ENCODE measurements at regions of chr6 and their contacts with region 1.

Region 1: DNA sequence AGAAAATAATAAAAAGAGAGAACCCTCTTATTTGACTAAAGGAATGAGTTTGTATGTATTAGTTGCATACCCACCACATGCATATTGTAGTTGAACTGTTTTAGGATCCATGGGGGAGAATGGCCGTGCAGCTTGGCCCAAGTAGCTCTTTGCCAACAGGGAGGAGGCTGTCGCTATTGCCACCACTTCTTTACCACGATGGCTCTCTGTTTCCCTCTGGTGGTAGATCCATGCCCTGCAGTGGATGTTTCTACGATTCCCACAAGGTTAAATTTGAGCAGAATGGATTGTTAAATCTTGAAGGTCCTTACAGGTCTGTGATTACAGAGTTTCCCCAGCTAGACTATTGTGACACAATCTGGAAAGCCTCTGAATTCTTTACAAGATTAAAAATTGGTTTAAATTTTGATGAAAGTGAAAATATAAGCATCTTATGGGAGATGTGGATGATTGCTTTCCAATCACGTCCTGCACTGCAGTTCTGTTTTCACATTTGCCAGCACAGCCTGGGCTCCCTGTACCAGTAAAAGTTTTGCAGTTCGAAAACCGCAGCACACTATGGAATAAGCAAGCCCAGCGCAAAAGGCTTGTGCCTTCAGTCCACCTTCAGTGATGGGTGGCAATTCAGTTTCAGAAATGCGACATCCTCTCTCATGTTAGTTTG is 34.4 kb upstream of the FNDC1 start:
- DNase-seq: peak; percentile 36
- ATAC-seq: peak; percentile 95
- H3K4me3 ChIP-seq: no peak overlapping the region
- H3K27ac ChIP-seq: no peak overlapping the region
- H3K4me1 ChIP-seq: no peaks in the 10 kb centered on the region
- H3K27me3 ChIP-seq: peaks cover 0 to 2% of the 10 kb centered on the region in 2 experiments; a peak in 1 of 4 replicates
- CTCF ChIP-seq: peak; percentile 89 to 97 (median 96)
- EP300 ChIP-seq: no peak
- POLR2A ChIP-seq: no peak
- RAD21 ChIP-seq: peak; percentile 98

Region 2: DNA sequence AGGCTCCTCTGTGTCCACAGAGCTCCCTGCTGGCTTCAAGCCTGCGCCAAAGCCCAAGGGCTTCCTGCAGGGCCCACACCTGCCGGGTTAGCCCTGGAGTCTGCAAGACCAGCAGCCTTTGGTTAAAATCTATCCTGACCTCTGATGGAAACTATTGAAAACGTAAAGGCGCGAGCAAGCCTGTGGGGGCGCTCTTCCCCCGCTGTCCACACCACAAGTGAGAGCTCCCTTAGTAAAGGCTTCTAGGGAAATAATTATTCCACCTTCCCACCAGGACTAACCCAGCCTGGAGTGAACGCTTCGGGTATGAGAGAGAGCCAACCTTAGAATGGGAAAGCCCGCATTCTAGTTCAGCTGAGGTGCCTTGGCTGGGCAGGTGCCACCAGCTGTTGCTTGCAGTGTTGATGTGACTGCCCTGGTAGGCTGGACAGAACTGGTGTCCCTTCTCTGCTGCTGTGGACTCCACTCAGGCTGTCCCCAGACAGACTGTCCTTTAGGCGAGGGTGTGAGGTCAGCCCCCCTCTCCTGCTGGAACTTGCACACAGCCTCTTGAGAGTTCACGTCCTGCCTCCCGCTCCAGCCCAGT is 416.3 kb before region 1 on chr6:
- CTCF ChIA-PET with region 1: no interaction called
- POLR2A ChIA-PET with region 1: no interaction called
- RAD21 ChIA-PET with region 1: no interaction called
- SMC1A ChIA-PET with region 1: no interaction called
- in situ Hi-C with region 1: no loop called
- intact Hi-C with region 1: no loop called
- DNase-seq: no peak
- ATAC-seq: no peak
- H3K4me3 ChIP-seq: no peak overlapping the region
- H3K27ac ChIP-seq: 0 out of 2 replicates have a peak overlapping the region, but pooled peaks have one; percentile 79
- H3K4me1 ChIP-seq: peaks cover 50% of the 10 kb centered on the region
- H3K27me3 ChIP-seq: no peaks in the 10 kb centered on the region
- CTCF ChIP-seq: peak in 2 of 3 experiments; percentile 29 to 61; a peak in 4 of 6 replicates
- EP300 ChIP-seq: no peak
- POLR2A ChIP-seq: no peak
- RAD21 ChIP-seq: peak; percentile 57

Region 3: GRCh38 chr6:158999666-159000403 is 135.0 kb before region 1 on chr6 and contains the start of gene RSPH3:
- CTCF ChIA-PET with region 1: interaction called, 482 read pairs
- POLR2A ChIA-PET with region 1: no interaction called
- RAD21 ChIA-PET with region 1: interaction called, 233 read pairs
- SMC1A ChIA-PET with region 1: interaction called, 304 read pairs
- in situ Hi-C with region 1: loop called (anchors 5 kb)
- intact Hi-C with region 1: no loop called
- DNase-seq: peak; percentile 77
- ATAC-seq: peak; percentile 96
- H3K4me3 ChIP-seq: peak within 1 kb of the TSS; percentile 81
- H3K27ac ChIP-seq: peak within 1 kb of the TSS; percentile 87
- H3K4me1 ChIP-seq: peaks cover 3% of the 10 kb centered on the region; the same call in 1 of the 2 replicates
- H3K27me3 ChIP-seq: no peaks in the 10 kb centered on the region
- CTCF ChIP-seq: peak in 1 of 3 experiments; percentile 34; a peak in 2 of 6 replicates
- EP300 ChIP-seq: no peak
- POLR2A ChIP-seq: peak; percentile 98
- RAD21 ChIP-seq: peak; percentile 21; the same call in 1 of the 2 replicates
- polyA plus RNA-seq, gene RSPH3: 0.40 to 0.51 TPM

Region 4: GRCh38 chr6:159098636-159099106 is 36.2 kb before region 1 on chr6:
- CTCF ChIA-PET with region 1: interaction called, 529 read pairs
- POLR2A ChIA-PET with region 1: interaction called, 12 read pairs
- RAD21 ChIA-PET with region 1: interaction called, 117 read pairs
- SMC1A ChIA-PET with region 1: interaction called, 292 read pairs
- in situ Hi-C with region 1: no loop called
- intact Hi-C with region 1: no loop called
- DNase-seq: no peak
- ATAC-seq: peak; percentile 52
- H3K4me3 ChIP-seq: no peak overlapping the region
- H3K27ac ChIP-seq: no peak overlapping the region
- H3K4me1 ChIP-seq: peaks cover 16% of the 10 kb centered on the region
- H3K27me3 ChIP-seq: no peaks in the 10 kb centered on the region
- CTCF ChIP-seq: no peak
- EP300 ChIP-seq: peak in 1 of 2 experiments; percentile 44; a peak in 1 of 4 replicates
- POLR2A ChIP-seq: no peak
- RAD21 ChIP-seq: no peak

Region 5: DNA sequence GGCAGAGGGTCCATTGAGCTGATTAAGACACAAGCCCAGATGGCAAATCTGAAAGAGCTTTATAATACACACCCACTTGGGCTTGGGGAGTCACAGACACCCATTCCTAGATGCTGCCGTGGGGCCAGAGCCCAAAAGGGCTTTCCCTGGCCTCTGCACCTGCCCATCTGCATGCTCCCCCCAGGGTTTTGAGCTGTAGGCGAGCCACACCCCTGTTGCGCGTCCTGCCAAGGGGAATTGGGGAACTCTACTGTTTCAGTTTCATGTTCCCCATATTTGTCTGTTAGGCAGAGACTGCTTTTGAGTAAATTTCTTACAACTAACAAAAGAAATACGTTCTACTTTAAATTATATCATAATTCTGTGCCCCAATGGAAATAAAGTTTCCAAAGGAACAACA is 18.5 kb before region 1 on chr6:
- CTCF ChIA-PET with region 1: interaction called, 529 read pairs
- POLR2A ChIA-PET with region 1: interaction called, 3 read pairs
- RAD21 ChIA-PET with region 1: interaction called, 42 read pairs
- SMC1A ChIA-PET with region 1: interaction called, 292 read pairs
- in situ Hi-C with region 1: no loop called
- intact Hi-C with region 1: no loop called
- DNase-seq: no peak
- ATAC-seq: peak; percentile 82
- H3K4me3 ChIP-seq: no peak overlapping the region
- H3K27ac ChIP-seq: no peak overlapping the region
- H3K4me1 ChIP-seq: peaks cover 31% of the 10 kb centered on the region
- H3K27me3 ChIP-seq: peaks cover 0 to 3% of the 10 kb centered on the region in 2 experiments; a peak in 1 of 4 replicates
- CTCF ChIP-seq: no peak
- EP300 ChIP-seq: peak in 1 of 2 experiments; percentile 47; a peak in 2 of 4 replicates
- POLR2A ChIP-seq: no peak
- RAD21 ChIP-seq: no peak